ENCODE measurements at regions of chr7 and their contacts with region 1.

Region 1: GRCh38 chr7:100705753-100706671 is at the start of gene POP7:
- DNase-seq: peak; percentile 93 to 99 (median 98)
- ATAC-seq: peak; percentile 95
- H3K4me3 ChIP-seq: peak within 1 kb of the TSS; percentile 80 to 94
- H3K4me3 Mint-ChIP-seq: peak within 1 kb of the TSS; percentile 96
- H3K27ac ChIP-seq: peak within 1 kb of the TSS; percentile 53 to 82
- H3K27ac Mint-ChIP-seq: peak within 1 kb of the TSS; percentile 94
- H3K4me1 ChIP-seq: peaks cover 16% of the 10 kb centered on the region
- H3K4me1 Mint-ChIP-seq: peaks cover 19% of the 10 kb centered on the region
- H3K27me3 ChIP-seq: no peaks in the 10 kb centered on the region
- H3K27me3 Mint-ChIP-seq: peaks cover 2% of the 10 kb centered on the region
- CTCF ChIP-seq: no peak
- total RNA-seq, gene POP7: 9.3 to 11.0 TPM

Region 2: GRCh38 chr7:100478966-100479665 is 226.9 kb before region 1 on chr7 and contains the start of gene TSC22D4:
- CTCF ChIA-PET with region 1: no interaction called
- POLR2A ChIA-PET with region 1: interaction called, 5 read pairs
- intact Hi-C with region 1: loop called in 1 of 2 experiments (anchors 5 kb)
- DNase-seq: peak; percentile 85 to 97 (median 94)
- ATAC-seq: peak; percentile 69
- H3K4me3 ChIP-seq: peak within 1 kb of the TSS; percentile 82 to 96
- H3K4me3 Mint-ChIP-seq: peak within 1 kb of the TSS; percentile 93
- H3K27ac ChIP-seq: peak within 1 kb of the TSS; percentile 72 to 75
- H3K27ac Mint-ChIP-seq: peak within 1 kb of the TSS; percentile 89
- H3K4me1 ChIP-seq: peaks cover 54% of the 10 kb centered on the region
- H3K4me1 Mint-ChIP-seq: peaks cover 44% of the 10 kb centered on the region
- H3K27me3 ChIP-seq: no peaks in the 10 kb centered on the region
- H3K27me3 Mint-ChIP-seq: no peaks in the 10 kb centered on the region
- CTCF ChIP-seq: no peak
- total RNA-seq, gene TSC22D4: 30.7 to 32.3 TPM

Region 3: DNA sequence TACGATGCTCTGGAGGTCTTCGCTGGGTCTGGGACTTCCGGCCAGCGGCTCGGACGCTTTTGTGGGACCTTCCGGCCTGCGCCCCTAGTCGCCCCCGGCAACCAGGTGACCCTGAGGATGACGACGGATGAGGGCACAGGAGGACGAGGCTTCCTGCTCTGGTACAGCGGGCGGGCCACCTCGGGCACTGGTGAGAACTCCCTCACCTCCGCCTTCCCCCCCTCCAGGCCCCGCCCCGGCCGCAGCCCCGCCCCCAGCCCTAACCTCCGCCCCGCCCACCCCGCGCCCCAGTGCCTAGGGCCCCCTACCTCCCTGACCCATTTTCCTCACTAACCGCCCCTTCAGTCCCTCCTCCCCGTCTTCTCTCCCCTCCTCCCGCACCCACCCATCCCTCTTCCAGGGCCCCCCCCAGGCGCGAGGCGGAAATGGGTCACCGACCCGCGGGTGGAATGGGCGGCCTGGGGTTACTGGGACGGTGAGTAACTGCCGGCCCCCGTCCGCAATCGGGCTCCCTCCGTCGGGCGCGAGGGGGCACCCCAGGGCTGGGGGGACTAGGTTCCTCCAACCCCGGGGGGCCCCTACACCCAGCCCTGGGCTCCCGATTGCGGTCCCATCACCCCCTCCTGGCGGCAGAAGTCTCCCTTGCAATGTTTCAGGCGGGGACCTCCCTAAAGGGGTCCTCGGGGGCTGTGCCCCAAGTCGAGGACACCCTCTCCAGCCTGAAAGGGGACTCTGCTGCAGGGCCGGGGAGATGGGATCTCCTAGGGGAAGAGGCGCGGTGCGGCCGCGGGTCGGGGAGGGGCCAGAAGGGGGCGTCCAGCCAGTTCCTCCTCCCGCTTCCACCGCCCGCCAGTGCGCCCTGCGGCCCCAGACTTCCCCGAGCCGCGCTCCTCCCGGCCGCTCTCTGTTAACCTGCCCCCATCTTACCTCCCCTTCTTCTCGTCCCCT is 101.7 kb before region 1 on chr7:
- CTCF ChIA-PET with region 1: interaction called, 4 read pairs
- POLR2A ChIA-PET with region 1: interaction called, 5 read pairs
- intact Hi-C with region 1: loop called in 1 of 2 experiments (anchors 1 kb)
- DNase-seq: peak; percentile 45 to 87 (median 77)
- ATAC-seq: peak; percentile 76
- H3K4me3 ChIP-seq: peak overlapping the region; percentile 62 to 79
- H3K4me3 Mint-ChIP-seq: peak overlapping the region; percentile 85
- H3K27ac ChIP-seq: peak overlapping the region; percentile 53 to 70
- H3K27ac Mint-ChIP-seq: peak overlapping the region; percentile 87
- H3K4me1 ChIP-seq: peaks cover 19% of the 10 kb centered on the region
- H3K4me1 Mint-ChIP-seq: peaks cover 22% of the 10 kb centered on the region
- H3K27me3 ChIP-seq: peaks cover 0 to 3% of the 10 kb centered on the region in 2 experiments
- H3K27me3 Mint-ChIP-seq: no peaks in the 10 kb centered on the region
- CTCF ChIP-seq: peak; percentile 50

Region 4: GRCh38 chr7:100632951-100633717 is 72.9 kb before region 1 on chr7:
- CTCF ChIA-PET with region 1: interaction called, 15 read pairs
- POLR2A ChIA-PET with region 1: interaction called, 8 read pairs
- intact Hi-C with region 1: loop called in 1 of 2 experiments (anchors 1 kb)
- DNase-seq: peak in 7 of 9 experiments; percentile 34 to 81 (median 60)
- ATAC-seq: peak; percentile 77
- H3K4me3 ChIP-seq: peak overlapping the region; percentile 69 to 82
- H3K4me3 Mint-ChIP-seq: peak overlapping the region; percentile 77
- H3K27ac ChIP-seq: peak overlapping the region in 1 of 2 experiments; percentile 50
- H3K27ac Mint-ChIP-seq: no peak overlapping the region
- H3K4me1 ChIP-seq: peaks cover 8% of the 10 kb centered on the region
- H3K4me1 Mint-ChIP-seq: peaks cover 21% of the 10 kb centered on the region
- H3K27me3 ChIP-seq: no peaks in the 10 kb centered on the region
- H3K27me3 Mint-ChIP-seq: no peaks in the 10 kb centered on the region
- CTCF ChIP-seq: peak; percentile 36

Region 5: DNA sequence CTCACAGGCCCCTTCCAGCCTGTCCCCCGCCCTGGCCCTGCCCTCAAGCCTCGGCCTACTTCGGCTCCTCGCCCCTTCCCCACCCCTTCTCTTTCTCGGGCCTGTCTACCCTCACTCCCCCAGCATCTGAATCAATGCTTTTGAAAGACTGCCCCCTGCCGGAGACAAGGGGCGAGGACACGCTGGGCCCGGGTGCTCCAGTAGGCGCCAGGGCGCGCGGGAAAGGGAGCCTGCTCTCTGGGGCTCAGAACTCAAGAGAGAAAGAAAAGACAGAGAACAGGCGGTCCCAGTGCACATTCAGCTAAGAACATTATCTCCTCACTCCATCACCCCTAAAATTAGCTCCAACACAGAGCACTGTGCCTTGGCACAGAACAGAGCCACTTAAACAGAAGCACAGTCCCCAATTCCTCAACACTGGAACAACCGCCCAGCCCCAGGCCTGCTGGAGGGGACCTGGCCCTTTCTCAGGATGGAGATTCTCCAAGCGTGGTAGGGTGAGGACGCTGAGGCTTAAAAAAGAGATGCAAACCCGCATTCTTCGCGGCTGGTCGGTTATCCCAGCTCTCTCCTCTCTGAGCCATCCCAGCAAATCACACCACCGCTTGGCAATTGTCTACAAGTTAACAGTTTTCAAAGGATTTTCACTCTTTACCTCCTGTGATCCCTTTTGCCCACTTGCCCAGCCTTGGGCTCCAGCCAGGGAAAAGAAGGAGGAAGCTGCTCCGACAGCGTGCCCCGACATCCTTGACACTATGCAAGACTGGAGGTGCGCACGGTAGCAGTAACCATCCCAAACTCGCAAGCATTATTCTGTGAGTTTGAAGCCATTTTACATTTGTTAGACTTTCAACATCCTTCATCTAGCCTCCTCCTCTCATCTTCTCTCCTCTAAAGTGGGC is 14.1 kb before region 1 on chr7:
- CTCF ChIA-PET with region 1: interaction called, 81 read pairs
- POLR2A ChIA-PET with region 1: interaction called, 20 read pairs
- intact Hi-C with region 1: loop called (anchors 1 kb)
- DNase-seq: peak; percentile 63 to 88 (median 82)
- ATAC-seq: peak; percentile 71
- H3K4me3 ChIP-seq: peak overlapping the region in 1 of 2 experiments; percentile 72
- H3K4me3 Mint-ChIP-seq: peak overlapping the region; percentile 94
- H3K27ac ChIP-seq: no peak overlapping the region
- H3K27ac Mint-ChIP-seq: peak overlapping the region; percentile 90
- H3K4me1 ChIP-seq: peaks cover 53% of the 10 kb centered on the region
- H3K4me1 Mint-ChIP-seq: peaks cover 42% of the 10 kb centered on the region
- H3K27me3 ChIP-seq: no peaks in the 10 kb centered on the region
- H3K27me3 Mint-ChIP-seq: no peaks in the 10 kb centered on the region
- CTCF ChIP-seq: peak; percentile 83

Region 6: DNA sequence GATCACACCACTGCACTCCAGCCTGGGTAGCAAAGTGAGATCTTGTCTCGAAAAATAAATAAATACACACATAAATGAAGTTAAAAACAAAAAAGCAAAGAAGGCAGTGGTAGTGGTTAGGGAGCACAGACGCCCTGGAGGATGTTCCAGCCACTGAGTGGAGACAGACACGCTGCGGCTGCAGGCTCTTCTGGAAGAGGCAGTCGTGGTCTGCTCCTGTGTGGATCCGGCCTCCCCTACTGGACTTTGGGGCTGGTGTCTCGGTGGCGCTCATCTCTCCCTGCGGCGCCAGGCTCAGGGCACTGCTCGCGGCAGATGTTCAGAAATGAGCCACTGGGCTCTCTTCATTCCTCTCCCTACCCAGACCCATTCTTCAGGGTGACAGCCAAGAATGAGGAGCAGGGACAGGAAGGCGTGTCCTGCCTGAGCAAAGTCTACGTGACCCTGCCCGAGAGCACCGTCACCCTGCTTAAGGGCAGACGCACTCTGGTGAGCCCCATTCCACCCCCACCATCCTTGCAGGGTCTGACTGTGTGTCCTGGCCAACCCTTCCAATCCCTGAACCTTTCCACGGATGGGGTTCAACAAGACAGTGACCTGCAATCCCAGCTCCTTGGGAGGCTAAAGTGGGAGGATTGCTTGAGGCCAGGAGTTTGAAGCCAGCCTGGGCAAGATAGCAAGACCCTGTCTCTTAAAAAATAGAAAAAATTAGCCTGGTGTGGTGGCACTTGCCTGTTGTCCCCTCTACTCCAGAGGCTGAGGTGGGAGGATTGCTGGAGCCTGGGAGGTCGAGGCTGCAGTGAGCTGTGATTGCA is 53.6 kb after region 1 on chr7:
- CTCF ChIA-PET with region 1: no interaction called
- POLR2A ChIA-PET with region 1: no interaction called
- intact Hi-C with region 1: no loop called
- DNase-seq: no peak
- ATAC-seq: no peak
- H3K4me3 ChIP-seq: no peak overlapping the region
- H3K4me3 Mint-ChIP-seq: no peak overlapping the region
- H3K27ac ChIP-seq: no peak overlapping the region
- H3K27ac Mint-ChIP-seq: no peak overlapping the region
- H3K4me1 ChIP-seq: no peaks in the 10 kb centered on the region
- H3K4me1 Mint-ChIP-seq: no peaks in the 10 kb centered on the region
- H3K27me3 ChIP-seq: no peaks in the 10 kb centered on the region
- H3K27me3 Mint-ChIP-seq: peaks cover 2% of the 10 kb centered on the region
- CTCF ChIP-seq: no peak

Region 7: GRCh38 chr7:100837099-100837836 is 131.3 kb after region 1 on chr7:
- CTCF ChIA-PET with region 1: no interaction called
- POLR2A ChIA-PET with region 1: no interaction called
- intact Hi-C with region 1: loop called in 1 of 2 experiments (anchors 5 kb)
- DNase-seq: peak; percentile 54 to 88 (median 78)
- ATAC-seq: peak; percentile 95
- H3K4me3 ChIP-seq: peak overlapping the region; percentile 50 to 64
- H3K4me3 Mint-ChIP-seq: peak overlapping the region; percentile 82
- H3K27ac ChIP-seq: peak overlapping the region; percentile 22 to 30
- H3K27ac Mint-ChIP-seq: peak overlapping the region; percentile 74
- H3K4me1 ChIP-seq: peaks cover 4% of the 10 kb centered on the region
- H3K4me1 Mint-ChIP-seq: peaks cover 8% of the 10 kb centered on the region
- H3K27me3 ChIP-seq: no peaks in the 10 kb centered on the region
- H3K27me3 Mint-ChIP-seq: no peaks in the 10 kb centered on the region
- CTCF ChIP-seq: no peak

Region 8: GRCh38 chr7:101085162-101085987 is 379.4 kb after region 1 on chr7 and contains the start of gene TRIM56:
- CTCF ChIA-PET with region 1: no interaction called
- POLR2A ChIA-PET with region 1: no interaction called
- intact Hi-C with region 1: loop called in 1 of 2 experiments (anchors 10 kb)
- DNase-seq: peak; percentile 43 to 89 (median 76)
- ATAC-seq: peak; percentile 91
- H3K4me3 ChIP-seq: peak within 1 kb of the TSS; percentile 81 to 95
- H3K4me3 Mint-ChIP-seq: peak within 1 kb of the TSS; percentile 98
- H3K27ac ChIP-seq: peak within 1 kb of the TSS; percentile 91 to 94
- H3K27ac Mint-ChIP-seq: peak within 1 kb of the TSS; percentile 98
- H3K4me1 ChIP-seq: peaks cover 30% of the 10 kb centered on the region
- H3K4me1 Mint-ChIP-seq: peaks cover 27% of the 10 kb centered on the region
- H3K27me3 ChIP-seq: no peaks in the 10 kb centered on the region
- H3K27me3 Mint-ChIP-seq: no peaks in the 10 kb centered on the region
- CTCF ChIP-seq: no peak
- total RNA-seq, gene TRIM56: 24.0 to 26.0 TPM

Region 9: DNA sequence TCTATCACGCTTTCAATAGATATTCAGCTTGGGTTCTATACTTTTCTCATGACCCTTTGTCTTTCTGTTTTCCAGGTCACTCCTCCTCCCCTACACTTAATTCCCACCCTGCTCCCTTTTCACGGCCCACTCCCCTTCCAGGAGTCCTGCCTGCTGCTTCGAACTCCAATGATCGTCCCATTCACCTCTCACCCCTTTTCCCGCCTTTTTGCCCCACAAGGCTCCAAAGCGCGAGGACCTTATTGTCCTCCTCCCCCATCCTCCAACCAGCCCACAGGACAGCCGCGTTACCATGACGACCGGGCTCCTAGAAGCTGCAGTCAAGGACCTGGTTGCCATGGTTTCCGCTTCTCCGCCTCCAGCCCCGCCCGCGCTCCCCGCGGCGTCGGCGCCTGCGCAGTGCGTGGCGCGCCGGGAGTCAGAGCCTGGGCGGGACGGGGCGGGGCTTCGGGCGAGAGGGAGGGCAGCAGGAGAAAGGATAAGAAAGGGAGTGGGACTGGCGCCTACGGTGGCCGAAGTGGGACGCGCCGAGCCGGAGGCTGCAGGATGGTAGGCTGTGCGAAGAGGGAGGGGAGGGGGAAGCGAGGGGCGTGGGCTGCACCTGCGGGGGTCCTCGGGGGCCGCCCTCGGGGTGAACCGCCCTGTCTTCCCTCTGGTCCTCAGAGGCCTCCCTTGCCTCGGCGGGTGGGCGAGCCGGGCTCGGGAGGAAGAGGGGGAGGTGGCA is 448.1 kb after region 1 on chr7 and contains the start of gene AP1S1:
- CTCF ChIA-PET with region 1: no interaction called
- POLR2A ChIA-PET with region 1: no interaction called
- intact Hi-C with region 1: no loop called
- DNase-seq: peak; percentile 76 to 96 (median 87)
- ATAC-seq: peak; percentile 88
- H3K4me3 ChIP-seq: peak within 1 kb of the TSS; percentile 61 to 77
- H3K4me3 Mint-ChIP-seq: peak within 1 kb of the TSS; percentile 88
- H3K27ac ChIP-seq: no peak within 1 kb of the TSS
- H3K27ac Mint-ChIP-seq: peak within 1 kb of the TSS; percentile 47
- H3K4me1 ChIP-seq: peaks cover 12% of the 10 kb centered on the region
- H3K4me1 Mint-ChIP-seq: peaks cover 11% of the 10 kb centered on the region
- H3K27me3 ChIP-seq: no peaks in the 10 kb centered on the region
- H3K27me3 Mint-ChIP-seq: peaks cover 9% of the 10 kb centered on the region
- CTCF ChIP-seq: no peak
- total RNA-seq, gene AP1S1: 2.1 to 2.2 TPM